Adrenal gland (tissue), 19 donors: ENCODE measurements at regions of chr16 and their contacts with region 1.

Region 1: DNA sequence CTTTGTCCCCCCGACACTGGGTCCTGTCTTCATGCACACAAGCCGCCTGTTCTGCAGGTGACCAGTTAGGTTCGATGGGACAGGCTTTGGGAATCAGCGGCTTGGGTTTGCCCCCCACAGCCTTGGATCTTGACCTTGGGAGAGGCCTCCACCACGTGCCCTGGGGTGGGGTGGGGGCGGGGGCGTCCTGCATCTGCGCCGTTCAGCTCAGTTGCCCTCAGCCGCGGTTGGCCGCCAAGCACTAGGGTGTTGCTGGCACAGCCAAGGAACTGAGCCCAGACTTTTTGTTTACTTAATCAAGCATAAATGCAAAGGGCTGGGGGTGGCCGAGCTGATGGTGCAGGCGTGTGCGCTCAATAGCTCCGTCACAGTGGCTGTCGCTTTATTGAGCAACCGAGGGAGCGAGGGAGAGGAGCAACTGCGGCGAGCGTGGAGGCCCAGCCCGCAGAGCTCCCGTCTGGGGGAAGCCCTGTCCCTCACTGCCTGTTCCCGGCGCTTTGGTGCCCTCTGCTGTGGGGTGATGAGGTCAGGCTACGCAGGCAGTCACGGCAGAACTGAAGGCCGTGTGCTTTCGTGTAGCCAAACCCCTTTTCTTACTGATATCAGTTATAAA is 33.9 kb downstream of the JPH3 start:
- DNase-seq: peak; percentile 87 to 93 (median 92)
- H3K4me3 ChIP-seq: peak overlapping the region in 1 of 4 donors; percentile 36
- H3K27ac ChIP-seq: no peak overlapping the region
- H3K4me1 ChIP-seq: peaks cover 5 to 12% of the 10 kb centered on the region in 2 donors
- H3K27me3 ChIP-seq: no peaks in the 10 kb centered on the region
- CTCF ChIP-seq: peak; percentile 33 to 84 (median 70)
- POLR2A ChIP-seq: peak in 1 of 2 donors; percentile 29

Region 2: GRCh38 chr16:87316923-87317749 is 319.0 kb before region 1 on chr16 and contains the start of gene C16orf95:
- intact Hi-C with region 1: loop called in 1 of 2 experiments (anchors 10 kb)
- DNase-seq: peak; percentile 97 to 99 (median 98)
- H3K4me3 ChIP-seq: peak within 1 kb of the TSS in 3 of 4 donors; percentile 77 to 100 (median 96)
- H3K27ac ChIP-seq: peak within 1 kb of the TSS; percentile 92 to 100 (median 96)
- H3K4me1 ChIP-seq: peaks cover 8 to 10% of the 10 kb centered on the region in 2 donors
- H3K27me3 ChIP-seq: no peaks in the 10 kb centered on the region
- CTCF ChIP-seq: peak; percentile 35 to 70 (median 63)
- POLR2A ChIP-seq: peak; percentile 59 to 95
- total RNA-seq, gene C16orf95: 0.67 to 9.9 (median 4.4) TPM

Region 3: DNA sequence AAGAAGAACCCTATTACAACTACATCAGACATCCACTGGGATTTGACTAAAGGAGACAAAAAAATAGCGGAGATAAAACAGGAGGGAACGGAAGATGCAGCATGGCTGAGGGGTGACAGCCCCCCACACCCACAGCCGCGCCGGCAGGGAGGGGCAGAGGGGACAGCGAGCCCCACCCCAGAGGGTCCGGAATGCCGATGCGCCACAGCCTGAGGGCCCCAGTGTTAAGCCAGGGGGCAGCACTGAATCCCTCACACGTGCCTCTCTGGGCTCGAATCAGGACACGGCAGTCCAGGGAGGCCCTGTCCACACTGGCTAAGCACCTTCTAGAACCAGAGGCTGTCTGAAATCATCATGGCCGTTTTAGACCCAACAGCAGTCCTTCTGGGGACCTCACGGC is 225.2 kb before region 1 on chr16:
- intact Hi-C with region 1: loop called in 1 of 2 experiments (anchors 5 kb)
- DNase-seq: peak in 1 of 7 donors; percentile 10
- H3K4me3 ChIP-seq: no peak overlapping the region
- H3K27ac ChIP-seq: no peak overlapping the region
- H3K4me1 ChIP-seq: peaks cover 0 to 4% of the 10 kb centered on the region in 2 donors
- H3K27me3 ChIP-seq: no peaks in the 10 kb centered on the region
- CTCF ChIP-seq: no peak
- POLR2A ChIP-seq: no peak

Region 4: DNA sequence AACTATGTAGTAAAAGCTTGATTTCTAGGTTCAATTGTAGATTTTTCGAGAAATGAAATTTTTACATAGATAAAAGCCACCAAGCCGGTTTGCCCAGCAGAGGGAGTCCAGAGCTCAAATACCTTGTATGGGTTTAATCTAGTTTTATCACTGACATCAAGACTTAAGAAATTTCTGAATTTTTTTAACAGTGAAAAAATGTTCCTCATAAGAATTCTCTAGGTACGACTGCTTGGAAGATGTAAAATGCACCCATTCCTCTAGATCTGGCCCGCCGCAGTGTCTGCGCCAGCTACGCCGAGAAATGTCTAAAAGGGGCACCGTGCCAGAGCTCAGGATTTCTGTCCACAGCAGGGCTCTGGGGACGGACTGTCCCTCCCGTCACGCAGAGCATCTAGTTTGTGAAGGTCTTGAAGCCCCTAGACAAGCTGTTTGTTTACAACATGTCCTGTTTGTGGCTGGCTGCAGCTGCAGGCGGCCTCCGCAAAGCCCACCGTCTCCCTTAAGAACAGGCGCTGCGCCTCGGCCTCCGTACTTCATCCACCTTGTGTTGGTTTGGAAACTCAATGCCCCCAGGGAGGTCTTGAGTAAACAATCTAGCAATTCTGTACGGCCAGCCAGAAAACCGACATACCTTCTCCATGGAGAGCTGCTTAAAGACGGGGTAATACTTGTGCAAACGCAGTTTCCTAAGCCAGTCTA is 219.2 kb before region 1 on chr16:
- intact Hi-C with region 1: loop called (anchors 5 to 10 kb)
- DNase-seq: peak in 6 of 7 donors; percentile 42 to 79 (median 62)
- H3K4me3 ChIP-seq: no peak overlapping the region
- H3K27ac ChIP-seq: no peak overlapping the region
- H3K4me1 ChIP-seq: no peaks in the 10 kb centered on the region
- H3K27me3 ChIP-seq: no peaks in the 10 kb centered on the region
- CTCF ChIP-seq: peak; percentile 48 to 74 (median 62)
- POLR2A ChIP-seq: no peak

Region 5: DNA sequence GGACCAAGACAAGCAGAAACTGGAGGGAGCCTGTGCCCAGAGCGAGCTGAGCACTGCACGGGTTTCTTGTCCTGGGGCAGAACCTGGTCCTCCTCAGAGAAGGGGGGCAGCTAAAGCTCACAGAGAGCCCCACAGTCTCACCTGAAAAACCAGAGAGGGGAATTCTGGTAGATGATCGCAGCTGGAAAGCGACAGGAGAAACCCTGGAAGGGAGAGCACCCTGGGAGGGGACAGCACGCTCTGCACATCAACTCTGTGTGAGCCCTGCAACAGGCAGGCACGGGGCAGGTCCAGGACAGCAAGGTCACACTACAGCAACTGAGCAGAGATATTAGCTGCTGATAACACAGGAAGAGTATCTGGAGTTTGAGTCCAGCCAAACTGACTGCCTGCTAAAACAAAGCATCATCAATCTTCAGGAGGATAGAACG is 161.6 kb before region 1 on chr16:
- intact Hi-C with region 1: no loop called
- DNase-seq: peak in 6 of 7 donors; percentile 77 to 91 (median 81)
- H3K4me3 ChIP-seq: no peak overlapping the region
- H3K27ac ChIP-seq: peak overlapping the region in 3 of 5 donors; percentile 47 to 75 (median 48)
- H3K4me1 ChIP-seq: peaks cover 23 to 60% of the 10 kb centered on the region in 2 donors
- H3K27me3 ChIP-seq: no peaks in the 10 kb centered on the region
- CTCF ChIP-seq: no peak
- POLR2A ChIP-seq: peak in 1 of 2 donors; percentile 71

Region 6: GRCh38 chr16:87550496-87550961 is 85.6 kb before region 1 on chr16:
- intact Hi-C with region 1: loop called in 1 of 2 experiments (anchors 5 kb)
- DNase-seq: peak in 6 of 7 donors; percentile 37 to 65 (median 56)
- H3K4me3 ChIP-seq: no peak overlapping the region
- H3K27ac ChIP-seq: no peak overlapping the region
- H3K4me1 ChIP-seq: no peaks in the 10 kb centered on the region
- H3K27me3 ChIP-seq: no peaks in the 10 kb centered on the region
- CTCF ChIP-seq: peak; percentile 83 to 91 (median 84)
- POLR2A ChIP-seq: no peak

Region 7: GRCh38 chr16:87581833-87582203 is 54.4 kb before region 1 on chr16:
- intact Hi-C with region 1: loop called in 1 of 2 experiments (anchors 5 kb)
- DNase-seq: peak; percentile 82 to 92 (median 90)
- H3K4me3 ChIP-seq: peak overlapping the region in 1 of 4 donors; percentile 14
- H3K27ac ChIP-seq: peak overlapping the region; percentile 80 to 95 (median 91)
- H3K4me1 ChIP-seq: peaks cover 20 to 28% of the 10 kb centered on the region in 2 donors
- H3K27me3 ChIP-seq: no peaks in the 10 kb centered on the region
- CTCF ChIP-seq: no peak
- POLR2A ChIP-seq: no peak

Region 8: GRCh38 chr16:87587636-87588035 is 48.5 kb before region 1 on chr16:
- intact Hi-C with region 1: loop called (anchors 2 to 5 kb)
- DNase-seq: no peak
- H3K4me3 ChIP-seq: no peak overlapping the region
- H3K27ac ChIP-seq: no peak overlapping the region
- H3K4me1 ChIP-seq: peaks cover 13 to 14% of the 10 kb centered on the region in 2 donors
- H3K27me3 ChIP-seq: peaks cover 6% of the 10 kb centered on the region
- CTCF ChIP-seq: no peak
- POLR2A ChIP-seq: no peak